IMR-90 (cell line): ENCODE measurements at regions of chr12 and their contacts with region 1.

Region 1: GRCh38 chr12:124898200-124898922 is 16.1 kb downstream of the UBC start:
- DNase-seq: no peak
- ATAC-seq: 0 out of 2 replicates have a peak, but pooled peaks have one; percentile 10
- H3K4me3 ChIP-seq: no peak overlapping the region
- H3K27ac ChIP-seq: no peak overlapping the region
- H3K4me1 ChIP-seq: peaks cover 15% of the 10 kb centered on the region
- H3K27me3 ChIP-seq: no peaks in the 10 kb centered on the region
- CTCF ChIP-seq: peak; percentile 48
- POLR2A ChIP-seq: no peak
- RAD21 ChIP-seq: peak; percentile 37

Region 2: GRCh38 chr12:124786061-124786964 is 112.0 kb before region 1 on chr12:
- CTCF ChIA-PET with region 1: no interaction called
- POLR2A ChIA-PET with region 1: no interaction called
- dilution Hi-C with region 1: no loop called
- in situ Hi-C with region 1: no loop called
- intact Hi-C with region 1: loop called (anchors 5 kb)
- DNase-seq: peak; percentile 91
- ATAC-seq: peak; percentile 100
- H3K4me3 ChIP-seq: peak overlapping the region; percentile 62
- H3K27ac ChIP-seq: peak overlapping the region; percentile 66
- H3K4me1 ChIP-seq: peaks cover 3% of the 10 kb centered on the region; the same call in 1 of the 2 replicates
- H3K27me3 ChIP-seq: no peaks in the 10 kb centered on the region
- CTCF ChIP-seq: no peak
- POLR2A ChIP-seq: no peak
- RAD21 ChIP-seq: no peak

Region 3: DNA sequence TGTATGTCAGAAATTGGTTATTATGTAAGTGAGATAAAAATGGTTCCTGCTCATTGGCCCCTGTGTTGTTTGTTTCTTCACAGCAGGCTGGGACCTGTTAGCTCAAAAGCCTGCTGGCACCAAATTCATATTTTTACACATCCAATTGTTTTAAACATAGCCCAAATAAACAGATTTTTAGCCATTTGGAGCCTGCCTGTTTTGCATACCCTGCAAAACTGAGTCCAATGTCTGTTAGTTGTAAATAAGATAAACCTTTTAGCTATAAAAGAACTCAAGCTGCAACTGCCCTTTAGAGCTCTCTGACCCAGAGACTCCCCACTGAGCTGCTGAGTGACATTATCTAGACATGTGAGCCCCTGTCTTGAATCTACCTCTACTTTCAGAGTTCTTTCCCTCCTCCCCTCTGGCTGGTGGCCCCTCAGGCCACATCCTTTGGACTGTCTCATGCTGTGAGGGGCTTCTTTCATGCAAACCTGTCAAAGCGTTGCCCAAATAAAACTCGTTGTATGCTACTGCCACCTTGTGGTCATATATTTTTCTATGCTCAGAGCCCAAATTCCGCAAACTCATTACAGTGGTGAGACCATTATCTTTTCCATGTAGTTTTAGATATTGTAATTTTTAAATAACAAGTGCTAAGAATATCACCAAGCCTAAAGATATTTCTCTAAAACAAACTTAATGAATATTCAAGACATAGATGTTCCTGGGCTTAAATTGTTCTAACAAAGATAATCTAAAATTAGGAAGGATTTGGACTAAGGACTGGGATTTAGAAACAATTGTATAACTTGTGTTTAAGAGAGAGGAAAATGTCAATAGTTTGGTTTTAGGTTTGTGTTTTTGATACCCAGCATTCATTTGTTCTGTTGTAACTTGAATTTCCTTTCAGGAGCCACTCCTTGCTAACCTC is 504.8 kb after region 1 on chr12:
- CTCF ChIA-PET with region 1: no interaction called
- POLR2A ChIA-PET with region 1: no interaction called
- dilution Hi-C with region 1: no loop called
- in situ Hi-C with region 1: no loop called
- intact Hi-C with region 1: no loop called
- DNase-seq: peak; percentile 6
- ATAC-seq: no peak
- H3K4me3 ChIP-seq: no peak overlapping the region
- H3K27ac ChIP-seq: no peak overlapping the region
- H3K4me1 ChIP-seq: no peaks in the 10 kb centered on the region
- H3K27me3 ChIP-seq: no peaks in the 10 kb centered on the region
- CTCF ChIP-seq: peak; percentile 47
- POLR2A ChIP-seq: no peak
- RAD21 ChIP-seq: peak; percentile 45